ENCODE measurements at regions of chr13 and their contacts with region 1.

Region 1: DNA sequence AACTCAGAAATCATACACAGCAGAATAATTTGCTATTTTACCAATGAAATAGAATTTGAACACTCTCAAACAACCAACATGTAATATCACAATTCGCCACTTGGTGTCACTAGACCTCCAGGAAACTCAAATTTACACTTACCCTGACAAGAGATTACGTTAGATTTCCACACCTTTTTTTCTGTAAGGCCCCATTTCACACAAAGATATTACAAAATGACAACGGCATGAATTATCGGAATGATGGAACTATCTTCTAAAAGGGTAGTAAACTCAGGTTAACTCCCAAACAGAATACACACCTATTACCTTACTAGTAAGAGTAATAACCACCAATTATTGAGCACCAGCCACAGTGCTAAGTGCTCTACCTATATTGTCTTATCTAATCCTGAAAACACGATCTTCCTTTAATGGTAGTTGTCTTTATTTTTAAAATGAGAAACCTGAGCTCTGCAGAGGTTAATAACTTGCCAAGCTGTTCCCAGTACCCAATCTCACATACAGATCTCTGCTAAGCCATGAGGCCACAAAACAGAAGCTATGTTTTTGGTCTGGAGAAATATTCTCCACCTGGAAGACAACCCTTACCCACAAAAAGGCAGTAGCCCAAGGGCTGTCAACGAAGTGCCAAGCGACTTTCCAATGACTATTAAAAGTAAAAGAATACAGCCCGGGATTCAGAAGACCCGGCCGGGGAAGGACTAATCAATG is 152.4 kb downstream of the DCLK1 start:
- DNase-seq: peak in 1 of 2 donors; percentile 9
- H3K4me3 ChIP-seq: no peak overlapping the region
- H3K27ac ChIP-seq: peak overlapping the region in 2 of 3 donors; percentile 31 to 55
- H3K4me1 ChIP-seq: no peaks in the 10 kb centered on the region
- H3K27me3 ChIP-seq: no peaks in the 10 kb centered on the region
- CTCF ChIP-seq: peak; percentile 51 to 87 (median 76)
- POLR2A ChIP-seq: no peak

Region 2: DNA sequence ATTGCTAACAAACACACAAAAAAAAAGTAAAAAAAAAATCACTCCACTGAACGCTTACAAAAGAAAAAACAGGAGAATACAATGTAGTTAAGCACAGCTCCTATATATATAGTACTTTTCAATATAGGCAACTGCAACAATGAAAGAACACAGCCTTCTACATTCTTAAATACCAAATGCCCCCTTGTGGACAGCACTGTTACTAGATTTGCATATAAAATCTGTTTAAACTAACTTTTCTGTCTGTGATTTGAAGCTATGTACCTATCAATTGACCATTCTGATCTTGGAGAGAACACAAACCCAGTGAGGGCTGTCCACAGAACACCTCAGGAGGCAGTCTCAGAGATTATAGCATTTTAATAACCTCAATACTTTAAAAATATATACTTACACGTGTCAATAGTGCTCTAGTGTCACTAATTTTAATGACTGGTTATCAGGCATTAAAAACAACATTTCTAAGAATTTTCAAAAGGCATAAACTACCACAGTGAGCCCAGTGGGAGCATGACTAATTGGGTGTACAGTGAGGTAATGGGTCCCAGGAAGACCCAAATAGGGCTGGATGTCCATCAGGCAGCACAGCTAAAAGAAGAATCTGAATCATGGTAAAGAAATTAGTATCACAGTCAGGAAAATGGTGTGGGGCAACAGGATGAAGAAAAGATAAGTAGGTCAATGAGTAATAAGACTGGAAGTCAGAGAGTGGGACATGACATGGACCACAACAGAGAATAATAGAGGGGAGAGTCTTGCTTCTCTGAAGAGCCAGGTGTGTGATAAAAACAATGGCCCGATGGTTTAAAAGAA is 296.6 kb after region 1 on chr13:
- intact Hi-C with region 1: loop called (anchors 5 kb)
- DNase-seq: peak in 1 of 2 donors; percentile 30
- H3K4me3 ChIP-seq: no peak overlapping the region
- H3K27ac ChIP-seq: no peak overlapping the region
- H3K4me1 ChIP-seq: no peaks in the 10 kb centered on the region
- H3K27me3 ChIP-seq: no peaks in the 10 kb centered on the region
- CTCF ChIP-seq: peak; percentile 18 to 65 (median 40)
- POLR2A ChIP-seq: no peak